Spleen (tissue), 13 donors: ENCODE measurements at regions of chr9 and their contacts with region 1.

Region 1: GRCh38 chr9:19379697-19380046 is 364 bp downstream of the RPS6 start:
- DNase-seq: peak; percentile 91
- H3K4me3 ChIP-seq: peak overlapping the region; percentile 49 to 90 (median 62)
- H3K27ac ChIP-seq: peak overlapping the region; percentile 91 to 97 (median 94)
- H3K4me1 ChIP-seq: peaks cover 10 to 40% (median 34%) of the 10 kb centered on the region in 6 donors
- H3K27me3 ChIP-seq: no peaks in the 10 kb centered on the region
- CTCF ChIP-seq: no peak
- POLR2A ChIP-seq: no peak

Region 2: DNA sequence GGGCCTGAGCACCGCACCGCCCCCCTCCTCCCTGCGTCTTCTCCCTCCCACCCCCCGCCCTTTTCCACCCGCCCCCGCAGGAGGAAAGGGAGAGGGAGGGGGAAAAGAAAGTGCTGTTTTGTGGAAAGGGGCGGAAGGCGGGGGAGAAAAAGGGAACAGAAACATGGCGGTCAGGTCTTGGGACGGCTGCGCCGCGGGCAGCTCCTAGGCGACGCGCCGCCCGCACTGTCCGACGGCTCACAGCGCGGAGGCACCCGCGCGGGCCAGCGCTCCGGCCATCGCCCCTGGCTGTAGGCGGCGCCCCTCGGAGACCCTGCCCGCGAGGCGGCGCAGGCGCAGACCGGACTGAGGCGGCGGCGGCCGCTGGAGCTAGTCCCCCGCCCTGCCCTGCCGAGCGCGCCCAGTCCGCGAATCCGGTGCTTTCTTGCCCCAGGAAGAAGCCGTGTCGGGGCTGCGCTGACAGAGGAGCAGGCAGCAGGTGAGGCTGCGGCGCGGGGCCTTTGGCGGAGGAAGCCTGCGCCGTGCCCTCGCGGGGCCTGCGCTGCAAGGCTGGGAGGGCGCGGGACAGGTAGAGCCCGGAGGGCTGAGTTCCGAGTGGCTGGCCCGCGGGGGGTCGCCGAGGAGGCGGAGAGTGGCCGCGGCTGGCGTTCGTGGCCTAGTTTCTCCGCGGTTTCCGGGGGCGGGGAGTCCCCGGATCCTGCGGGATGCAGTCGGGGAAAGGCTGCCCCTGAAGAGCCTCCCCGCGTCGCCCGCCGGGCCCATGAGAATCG is 149.1 kb before region 1 on chr9 and contains the start of gene DENND4C:
- intact Hi-C with region 1: loop called (anchors 10 kb)
- DNase-seq: peak; percentile 96
- H3K4me3 ChIP-seq: peak within 1 kb of the TSS; percentile 78 to 97 (median 92)
- H3K27ac ChIP-seq: peak within 1 kb of the TSS; percentile 77 to 97 (median 96)
- H3K4me1 ChIP-seq: peaks cover 22 to 53% (median 33%) of the 10 kb centered on the region in 6 donors
- H3K27me3 ChIP-seq: no peaks in the 10 kb centered on the region
- CTCF ChIP-seq: peak in 6 of 11 experiments; percentile 5 to 38 (median 12)
- POLR2A ChIP-seq: peak in 2 of 3 donors; percentile 42 to 71
- total RNA-seq, gene DENND4C: 41.0 to 106 (median 55.3) TPM